IMR-90 (cell line): ENCODE measurements at regions of chr20 and their contacts with region 1.

Region 1: GRCh38 chr20:10673988-10674711 is at the start of gene JAG1:
- DNase-seq: peak; percentile 95
- ATAC-seq: peak; percentile 76
- H3K4me3 ChIP-seq: peak within 1 kb of the TSS; percentile 93
- H3K27ac ChIP-seq: peak within 1 kb of the TSS; percentile 92
- H3K4me1 ChIP-seq: peaks cover 6% of the 10 kb centered on the region
- H3K27me3 ChIP-seq: no peaks in the 10 kb centered on the region
- CTCF ChIP-seq: no peak
- POLR2A ChIP-seq: peak; percentile 74
- RAD21 ChIP-seq: no peak; the same call in 1 of the 2 replicates
- total RNA-seq, gene JAG1: 19.4 and 22.6 TPM in 2 replicates

Region 2: GRCh38 chr20:9978397-9979004 is 695.6 kb before region 1 on chr20:
- CTCF ChIA-PET with region 1: no interaction called
- POLR2A ChIA-PET with region 1: no interaction called
- dilution Hi-C with region 1: no loop called
- in situ Hi-C with region 1: no loop called
- intact Hi-C with region 1: loop called (anchors 5 kb)
- DNase-seq: peak; percentile 89
- ATAC-seq: peak; percentile 97
- H3K4me3 ChIP-seq: no peak overlapping the region
- H3K27ac ChIP-seq: no peak overlapping the region
- H3K4me1 ChIP-seq: no peaks in the 10 kb centered on the region
- H3K27me3 ChIP-seq: peaks cover 3% of the 10 kb centered on the region; the same call in 1 of the 2 replicates
- CTCF ChIP-seq: peak; percentile 98
- POLR2A ChIP-seq: no peak
- RAD21 ChIP-seq: peak; percentile 98

Region 3: DNA sequence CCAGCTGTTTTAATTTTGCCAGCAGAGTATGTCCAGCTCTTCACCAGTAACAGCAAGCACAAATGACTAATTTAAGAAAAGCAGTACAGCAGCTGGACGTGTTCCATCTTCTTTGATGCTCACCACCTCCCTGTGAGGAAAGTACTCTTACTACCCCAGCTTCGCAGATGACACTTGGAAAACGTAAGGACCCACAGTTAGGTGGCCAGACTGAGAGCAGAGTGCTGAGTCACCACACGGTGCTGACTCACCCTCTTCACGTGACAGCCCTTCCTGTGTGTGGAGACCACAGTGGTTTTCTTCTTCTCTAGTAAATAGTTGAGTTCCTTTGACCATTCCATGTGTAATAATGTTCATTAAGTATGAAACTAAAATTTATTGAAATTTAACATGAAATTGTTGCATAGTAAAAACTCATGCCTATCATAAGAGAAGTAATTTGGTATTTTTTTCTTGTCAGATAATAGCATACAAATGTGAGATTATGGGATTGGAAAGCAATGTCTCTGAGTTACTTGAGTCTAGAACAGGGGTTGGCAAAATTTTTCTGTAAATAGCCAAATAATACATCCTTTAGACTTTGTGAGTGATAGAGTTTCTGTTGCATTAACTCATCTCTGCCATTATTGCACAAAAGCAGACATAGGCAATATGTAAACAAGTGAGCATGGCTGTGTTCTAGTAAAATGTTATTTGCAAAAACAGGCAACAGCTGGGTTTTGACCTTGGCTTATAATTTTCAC is 162.5 kb before region 1 on chr20:
- CTCF ChIA-PET with region 1: no interaction called
- POLR2A ChIA-PET with region 1: no interaction called
- dilution Hi-C with region 1: no loop called
- in situ Hi-C with region 1: no loop called
- intact Hi-C with region 1: no loop called
- DNase-seq: peak; percentile 99
- ATAC-seq: peak; percentile 89
- H3K4me3 ChIP-seq: no peak overlapping the region
- H3K27ac ChIP-seq: peak overlapping the region; percentile 95
- H3K4me1 ChIP-seq: peaks cover 22% of the 10 kb centered on the region
- H3K27me3 ChIP-seq: no peaks in the 10 kb centered on the region
- CTCF ChIP-seq: no peak
- POLR2A ChIP-seq: 0 out of 2 replicates have a peak, but pooled peaks have one; percentile 34
- RAD21 ChIP-seq: no peak

Region 4: DNA sequence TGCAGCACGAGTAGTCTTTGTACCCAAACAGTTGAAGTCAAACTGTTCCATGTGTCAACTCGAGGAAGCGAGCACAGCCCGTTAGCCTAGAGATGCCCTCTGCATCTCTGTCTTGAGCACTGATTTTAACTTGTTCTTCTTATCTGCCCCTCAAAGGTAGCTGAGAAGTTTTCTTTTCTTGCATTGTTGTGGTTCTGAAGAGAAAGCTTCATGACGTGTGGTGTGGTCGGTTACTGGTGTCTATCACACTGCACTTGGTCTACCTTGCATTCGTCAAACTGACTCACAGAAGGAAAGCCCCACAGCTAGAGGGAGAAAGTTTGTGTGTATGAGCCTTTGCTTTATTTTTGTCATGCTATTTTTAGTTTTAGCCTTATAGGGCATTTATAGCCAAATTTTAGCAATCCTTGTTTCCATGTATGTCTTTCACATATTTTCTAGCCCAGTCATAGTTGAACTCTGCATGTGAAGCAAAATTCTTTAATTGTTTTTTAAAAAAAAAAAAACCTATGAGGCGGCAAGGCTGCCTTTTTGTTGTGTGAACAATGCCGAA is 115.4 kb before region 1 on chr20:
- CTCF ChIA-PET with region 1: interaction called, 6 read pairs
- POLR2A ChIA-PET with region 1: interaction called, 3 read pairs
- dilution Hi-C with region 1: no loop called
- in situ Hi-C with region 1: no loop called
- intact Hi-C with region 1: loop called (anchors 1 kb)
- DNase-seq: peak; percentile 99
- ATAC-seq: peak; percentile 89
- H3K4me3 ChIP-seq: peak overlapping the region; percentile 1; the same call in 1 of the 2 replicates
- H3K27ac ChIP-seq: peak overlapping the region; percentile 88
- H3K4me1 ChIP-seq: peaks cover 15% of the 10 kb centered on the region
- H3K27me3 ChIP-seq: no peaks in the 10 kb centered on the region
- CTCF ChIP-seq: peak; percentile 28; the same call in 1 of the 2 replicates
- POLR2A ChIP-seq: 0 out of 2 replicates have a peak, but pooled peaks have one; percentile 21
- RAD21 ChIP-seq: no peak; the same call in none of the 2 replicates

Region 5: GRCh38 chr20:10922941-10923340 is 248.8 kb after region 1 on chr20:
- CTCF ChIA-PET with region 1: no interaction called
- POLR2A ChIA-PET with region 1: interaction called, 4 read pairs
- dilution Hi-C with region 1: no loop called
- in situ Hi-C with region 1: no loop called
- intact Hi-C with region 1: loop called (anchors 1 kb)
- DNase-seq: peak; percentile 96
- ATAC-seq: peak; percentile 70
- H3K4me3 ChIP-seq: no peak overlapping the region
- H3K27ac ChIP-seq: peak overlapping the region; percentile 93
- H3K4me1 ChIP-seq: peaks cover 34% of the 10 kb centered on the region
- H3K27me3 ChIP-seq: no peaks in the 10 kb centered on the region
- CTCF ChIP-seq: no peak
- POLR2A ChIP-seq: no peak
- RAD21 ChIP-seq: no peak

Region 6: GRCh38 chr20:11091511-11091910 is 417.4 kb after region 1 on chr20:
- CTCF ChIA-PET with region 1: no interaction called
- POLR2A ChIA-PET with region 1: no interaction called
- dilution Hi-C with region 1: no loop called
- in situ Hi-C with region 1: no loop called
- intact Hi-C with region 1: loop called (anchors 5 kb)
- DNase-seq: no peak
- ATAC-seq: no peak
- H3K4me3 ChIP-seq: no peak overlapping the region
- H3K27ac ChIP-seq: no peak overlapping the region
- H3K4me1 ChIP-seq: no peaks in the 10 kb centered on the region
- H3K27me3 ChIP-seq: no peaks in the 10 kb centered on the region
- CTCF ChIP-seq: no peak
- POLR2A ChIP-seq: no peak
- RAD21 ChIP-seq: no peak

Region 7: GRCh38 chr20:11267131-11267761 is 593.1 kb after region 1 on chr20:
- CTCF ChIA-PET with region 1: interaction called, 5 read pairs
- POLR2A ChIA-PET with region 1: no interaction called
- dilution Hi-C with region 1: no loop called
- in situ Hi-C with region 1: loop called (anchors 10 kb)
- intact Hi-C with region 1: loop called (anchors 2 kb)
- DNase-seq: peak; percentile 98
- ATAC-seq: peak; percentile 98
- H3K4me3 ChIP-seq: no peak overlapping the region
- H3K27ac ChIP-seq: peak overlapping the region; percentile 19; the same call in 1 of the 2 replicates
- H3K4me1 ChIP-seq: peaks cover 4% of the 10 kb centered on the region
- H3K27me3 ChIP-seq: no peaks in the 10 kb centered on the region
- CTCF ChIP-seq: peak; percentile 20; the same call in 1 of the 2 replicates
- POLR2A ChIP-seq: no peak
- RAD21 ChIP-seq: peak; percentile 53; the same call in 1 of the 2 replicates

Region 8: DNA sequence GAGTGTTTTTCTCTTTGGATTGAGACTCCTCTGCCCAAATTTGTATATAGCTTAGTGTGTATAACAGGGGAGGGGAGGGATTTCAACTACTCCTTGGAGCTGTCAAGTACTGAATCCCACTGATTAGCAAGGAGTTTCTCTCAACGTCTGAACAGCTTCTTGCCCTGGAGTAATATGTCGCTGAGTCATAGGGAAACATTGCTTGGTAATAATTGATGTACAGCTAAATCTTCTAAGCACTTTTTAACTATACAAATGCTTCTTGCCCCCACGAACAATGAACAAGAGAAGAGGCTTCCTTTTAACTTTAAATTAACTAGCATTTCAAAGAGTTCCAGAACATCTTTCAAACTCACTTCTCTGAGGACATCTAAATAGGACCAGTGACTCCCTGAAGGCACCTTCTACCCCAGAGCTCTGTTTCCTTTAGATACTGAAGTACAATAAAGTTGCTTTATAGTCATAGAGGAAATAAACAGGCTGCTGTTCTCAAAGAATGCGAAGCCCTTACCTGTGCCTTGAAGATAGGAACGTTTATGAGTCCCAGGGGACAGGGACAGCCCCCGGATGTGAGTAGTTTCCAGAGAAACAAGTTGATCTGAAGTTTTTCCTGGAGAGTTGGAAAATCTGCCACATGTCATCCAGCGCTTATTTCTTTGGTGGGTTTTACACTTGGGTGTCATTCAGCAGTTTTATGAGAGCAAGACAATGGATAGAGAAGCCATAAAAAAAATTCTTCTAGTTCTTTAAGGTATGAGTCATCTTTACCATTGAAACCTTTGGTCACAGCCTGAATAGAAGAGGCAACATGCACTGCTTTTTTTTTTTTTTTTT is 781.0 kb after region 1 on chr20:
- CTCF ChIA-PET with region 1: no interaction called
- POLR2A ChIA-PET with region 1: no interaction called
- dilution Hi-C with region 1: no loop called
- in situ Hi-C with region 1: no loop called
- intact Hi-C with region 1: loop called (anchors 10 kb)
- DNase-seq: peak; percentile 78
- ATAC-seq: peak; percentile 63
- H3K4me3 ChIP-seq: no peak overlapping the region
- H3K27ac ChIP-seq: no peak overlapping the region
- H3K4me1 ChIP-seq: peaks cover 19% of the 10 kb centered on the region
- H3K27me3 ChIP-seq: no peaks in the 10 kb centered on the region
- CTCF ChIP-seq: no peak
- POLR2A ChIP-seq: no peak
- RAD21 ChIP-seq: no peak